Heart right ventricle (tissue), 16 donors: ENCODE measurements at regions of chr5 and their contacts with region 1.

Region 1: DNA sequence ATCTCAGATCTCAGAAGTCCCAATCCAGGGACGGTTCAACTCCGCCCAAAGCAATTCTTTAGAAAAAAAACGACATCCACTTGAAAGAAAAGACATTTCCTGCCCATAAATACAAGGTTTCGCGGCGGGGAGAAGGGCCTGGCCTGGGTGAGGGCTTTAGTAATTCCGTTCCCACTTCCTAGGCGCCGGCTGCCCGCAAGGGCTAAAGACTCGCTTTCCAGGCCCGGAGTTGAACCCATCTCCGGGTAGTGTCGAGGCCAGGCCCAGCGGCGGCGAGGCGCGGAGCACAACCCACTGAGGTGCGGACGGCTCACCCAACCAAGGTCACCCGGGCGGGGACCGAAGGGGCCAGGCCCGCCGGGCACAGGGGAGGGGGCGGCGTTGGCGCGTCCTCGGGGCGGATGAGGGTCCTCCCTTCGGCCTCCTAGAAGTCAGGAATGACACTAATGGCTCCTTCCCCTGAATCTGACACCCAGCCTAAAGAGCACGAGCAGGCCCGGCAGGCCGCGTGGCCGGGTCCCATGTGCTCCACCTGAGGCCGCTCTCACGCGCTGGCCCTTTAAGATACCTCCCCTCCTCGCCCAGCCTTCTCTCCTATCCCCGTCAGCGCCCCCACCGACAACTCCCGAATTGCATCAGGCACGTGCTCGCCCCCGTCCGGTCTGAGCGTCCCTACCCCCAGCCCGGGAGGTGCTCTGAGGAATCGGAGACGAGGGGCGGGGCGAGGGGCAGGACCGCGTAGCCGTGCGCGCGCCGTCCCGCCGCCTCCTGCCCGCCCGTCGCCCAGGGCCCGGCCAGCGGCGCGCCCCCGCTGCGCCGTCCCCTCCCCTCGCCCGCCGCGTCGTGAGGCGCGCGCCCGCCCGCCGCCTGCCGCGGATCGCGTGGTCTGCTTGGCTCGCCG is 467 bp upstream of the LARP1 start:
- DNase-seq: peak; percentile 100
- ATAC-seq: peak; percentile 91 to 96 (median 94)
- H3K4me3 ChIP-seq: peak overlapping the region; percentile 87 to 99 (median 98)
- H3K27ac ChIP-seq: peak overlapping the region; percentile 86 to 99 (median 98)
- H3K4me1 ChIP-seq: peaks cover 7 to 48% (median 39%) of the 10 kb centered on the region in 9 donors
- H3K27me3 ChIP-seq: no peaks in the 10 kb centered on the region
- CTCF ChIP-seq: peak in 8 of 9 donors; percentile 28 to 63 (median 44)

Region 2: DNA sequence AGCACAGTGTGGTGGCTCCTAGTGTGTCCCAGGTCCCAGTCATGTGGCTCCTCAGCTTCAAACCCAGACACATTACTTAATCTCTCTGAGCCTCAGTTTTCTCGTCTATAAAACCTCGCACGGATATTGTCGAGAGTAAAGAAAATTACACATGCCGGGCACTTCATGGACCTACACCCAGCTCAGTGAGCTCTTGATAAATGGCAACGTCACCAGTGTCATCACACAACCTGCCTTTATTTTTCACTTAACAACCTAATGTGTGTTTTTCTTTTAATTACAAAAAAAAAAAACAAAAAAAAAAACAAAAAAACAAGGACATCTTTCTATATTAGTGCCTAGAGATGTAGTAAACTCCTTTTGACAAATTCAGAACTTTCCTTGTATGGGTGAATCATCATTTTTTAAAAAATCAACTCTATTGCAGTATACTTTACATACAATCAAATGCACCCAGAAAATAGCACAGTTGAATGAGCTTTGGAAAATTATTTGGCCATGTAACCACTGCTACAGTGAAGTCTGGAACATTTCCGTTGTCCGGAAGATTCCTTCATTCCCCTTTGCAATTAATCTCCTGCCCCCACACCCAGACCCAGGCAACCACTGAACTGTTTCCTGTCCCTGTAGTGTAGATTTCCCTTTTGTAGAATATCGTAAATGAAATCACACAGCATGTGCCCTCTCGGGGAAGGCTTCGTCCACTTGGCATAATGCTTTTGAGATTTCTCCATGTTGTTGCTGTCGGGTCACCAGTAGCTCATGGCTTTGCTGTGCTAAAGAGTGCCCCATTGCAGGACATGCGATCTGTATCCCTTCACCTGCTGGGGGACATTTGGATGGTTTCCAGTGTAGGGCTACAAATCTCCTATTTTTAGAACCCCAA is 100.0 kb before region 1 on chr5:
- intact Hi-C with region 1: loop called in 1 of 10 experiments (anchors 10 kb)
- DNase-seq: no peak
- ATAC-seq: peak in 7 of 8 donors; percentile 10 to 66 (median 48)
- H3K4me3 ChIP-seq: peak overlapping the region in 6 of 10 donors; percentile 6 to 28 (median 18)
- H3K27ac ChIP-seq: peak overlapping the region; percentile 3 to 78 (median 61)
- H3K4me1 ChIP-seq: peaks cover 6 to 24% (median 22%) of the 10 kb centered on the region in 9 donors
- H3K27me3 ChIP-seq: no peaks in the 10 kb centered on the region
- CTCF ChIP-seq: no peak

Region 3: DNA sequence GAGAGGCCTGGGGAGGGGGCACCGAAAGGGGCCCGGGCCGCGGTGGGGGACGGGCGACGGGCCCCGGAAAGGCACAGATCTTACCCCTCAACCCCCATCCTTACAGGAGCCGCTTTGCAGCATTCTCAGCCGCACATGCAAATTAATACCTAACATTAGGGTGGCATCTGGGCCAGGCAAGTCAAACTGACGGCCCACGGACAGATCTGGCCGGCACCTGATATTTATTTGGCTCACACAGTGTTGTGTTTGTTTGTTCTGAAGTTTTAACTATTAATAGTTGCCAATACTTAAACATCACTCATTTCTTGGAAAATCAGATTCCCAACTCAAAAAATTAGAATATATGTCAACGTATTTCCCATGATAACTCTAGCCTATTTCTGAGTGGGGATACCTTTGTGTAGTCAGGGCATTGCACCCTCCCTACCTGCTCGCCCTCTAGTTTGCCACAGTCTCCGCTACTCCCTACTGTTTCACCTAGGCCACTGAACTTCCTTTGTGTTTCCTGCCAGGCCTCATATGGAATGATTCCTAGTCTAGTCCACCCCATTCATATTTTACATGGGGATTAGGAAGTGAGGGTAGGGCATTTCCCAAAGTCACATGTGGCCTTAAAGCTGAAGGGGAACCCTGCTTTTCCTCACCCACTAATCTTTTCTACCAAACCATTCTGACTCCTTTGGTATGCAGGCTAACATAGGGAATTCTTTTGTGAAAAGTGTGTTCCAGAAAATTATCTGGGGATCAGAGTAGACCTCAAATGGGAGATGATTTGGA is 71.4 kb before region 1 on chr5:
- intact Hi-C with region 1: loop called in 6 of 10 experiments (anchors 2 to 10 kb)
- DNase-seq: no peak
- ATAC-seq: no peak
- H3K4me3 ChIP-seq: peak overlapping the region; percentile 12 to 63 (median 61)
- H3K27ac ChIP-seq: peak overlapping the region; percentile 30 to 88 (median 82)
- H3K4me1 ChIP-seq: peaks cover 3 to 19% (median 11%) of the 10 kb centered on the region in 9 donors
- H3K27me3 ChIP-seq: no peaks in the 10 kb centered on the region
- CTCF ChIP-seq: no peak

Region 4: GRCh38 chr5:154714266-154714986 is 40.3 kb before region 1 on chr5:
- intact Hi-C with region 1: no loop called
- DNase-seq: no peak
- ATAC-seq: peak in 4 of 8 donors; percentile 16 to 55 (median 28)
- H3K4me3 ChIP-seq: peak overlapping the region in 1 of 10 donors; percentile 14
- H3K27ac ChIP-seq: peak overlapping the region in 2 of 10 donors; percentile 15 to 83
- H3K4me1 ChIP-seq: peaks cover 0 to 28% (median 11%) of the 10 kb centered on the region in 9 donors
- H3K27me3 ChIP-seq: no peaks in the 10 kb centered on the region
- CTCF ChIP-seq: no peak

Region 5: DNA sequence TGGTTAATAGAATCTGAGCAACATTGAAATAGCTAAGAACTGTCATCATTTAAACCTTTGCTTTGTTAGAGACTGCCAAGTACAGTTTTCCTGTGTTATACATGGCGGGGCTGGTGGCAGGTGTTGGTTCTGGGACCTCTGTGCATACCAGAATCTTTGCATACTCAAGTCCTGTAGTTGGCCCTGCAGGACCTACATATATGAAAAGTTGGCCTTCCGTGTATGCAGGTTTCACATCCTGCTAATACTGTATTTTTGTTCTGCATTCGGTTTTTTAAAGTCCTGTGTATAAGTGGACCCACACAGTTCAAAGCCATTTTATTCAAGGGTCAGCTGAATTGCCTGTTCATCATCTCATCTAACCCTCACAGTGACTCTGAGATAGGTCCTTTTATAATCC is 36.8 kb after region 1 on chr5:
- intact Hi-C with region 1: loop called in 2 of 10 experiments (anchors 5 kb)
- DNase-seq: no peak
- ATAC-seq: no peak
- H3K4me3 ChIP-seq: no peak overlapping the region
- H3K27ac ChIP-seq: peak overlapping the region in 2 of 10 donors; percentile 12 to 15
- H3K4me1 ChIP-seq: peaks cover 14 to 67% (median 39%) of the 10 kb centered on the region in 9 donors
- H3K27me3 ChIP-seq: no peaks in the 10 kb centered on the region
- CTCF ChIP-seq: no peak

Region 6: DNA sequence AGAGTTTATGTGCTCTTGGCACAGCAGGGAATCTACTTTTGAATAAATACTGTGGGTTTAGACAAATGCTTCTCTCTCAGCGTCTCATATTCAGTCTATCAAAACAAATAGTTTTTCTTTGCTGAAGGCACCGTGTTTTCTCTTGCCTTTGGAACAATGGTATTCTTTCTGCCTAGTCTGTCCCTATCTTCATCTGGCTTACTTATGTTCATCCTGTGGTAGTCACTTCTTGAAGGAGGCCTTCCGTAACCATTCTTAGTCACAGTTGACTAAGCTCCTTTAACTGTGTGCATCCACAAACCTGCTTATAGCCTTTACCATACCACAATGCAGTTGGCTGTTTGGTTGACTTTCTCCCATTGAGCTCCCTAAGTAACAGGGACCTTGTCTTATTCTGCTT is 46.4 kb after region 1 on chr5:
- intact Hi-C with region 1: loop called in 2 of 10 experiments (anchors 5 kb)
- DNase-seq: no peak
- ATAC-seq: no peak
- H3K4me3 ChIP-seq: no peak overlapping the region
- H3K27ac ChIP-seq: peak overlapping the region in 1 of 10 donors; percentile 11
- H3K4me1 ChIP-seq: peaks cover 0 to 27% (median 0%) of the 10 kb centered on the region in 9 donors
- H3K27me3 ChIP-seq: no peaks in the 10 kb centered on the region
- CTCF ChIP-seq: no peak

Region 7: DNA sequence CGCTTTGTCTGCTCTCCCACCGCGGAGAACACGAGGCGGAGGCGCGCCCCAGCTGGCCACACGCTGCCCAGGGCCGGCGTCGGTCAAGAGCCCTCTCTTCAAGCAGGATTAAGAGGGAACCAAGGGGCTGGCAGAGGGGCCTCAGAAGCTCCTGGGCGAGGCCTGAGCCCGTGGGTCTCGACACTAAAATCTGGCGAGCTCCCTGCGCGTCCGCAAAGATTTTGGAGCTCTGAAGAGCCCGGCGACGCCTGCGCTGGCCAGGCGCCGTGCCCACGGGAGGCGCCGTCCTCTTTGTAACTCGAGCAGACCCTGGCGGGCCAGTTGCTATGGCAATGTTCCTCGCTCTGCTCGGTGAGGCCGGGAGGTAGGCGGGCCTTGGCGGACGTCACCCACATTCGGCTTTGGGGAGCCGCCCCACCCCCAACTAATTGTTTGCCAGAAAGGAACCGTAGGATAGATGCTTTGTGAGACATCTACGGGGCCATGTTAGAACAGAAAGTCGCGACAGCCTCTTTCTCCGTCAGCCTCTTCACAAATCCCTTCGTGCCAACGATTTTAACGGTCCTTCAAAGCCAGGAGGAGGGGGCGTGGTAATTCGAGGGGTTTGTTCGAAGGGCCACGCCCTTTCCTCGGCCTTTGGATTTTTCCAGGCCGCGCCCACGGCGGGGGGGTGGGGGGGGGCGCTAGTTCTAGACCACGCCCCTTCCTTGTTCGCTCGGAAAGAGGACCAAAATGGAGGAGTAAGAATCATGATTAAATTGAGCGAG is 103.0 kb after region 1 on chr5:
- intact Hi-C with region 1: loop called in 6 of 10 experiments (anchors 1 to 5 kb)
- DNase-seq: peak; percentile 92 to 95
- ATAC-seq: peak; percentile 80 to 90 (median 85)
- H3K4me3 ChIP-seq: peak overlapping the region; percentile 47 to 87 (median 80)
- H3K27ac ChIP-seq: peak overlapping the region; percentile 95 to 100 (median 98)
- H3K4me1 ChIP-seq: peaks cover 5 to 49% (median 43%) of the 10 kb centered on the region in 9 donors
- H3K27me3 ChIP-seq: no peaks in the 10 kb centered on the region
- CTCF ChIP-seq: peak in 6 of 9 donors; percentile 1 to 36 (median 24)